ENCODE measurements at regions of chrX and their contacts with region 1.

Region 1: GRCh38 chrX:9899640-9900111 is 67.5 kb upstream of the CLDN34 start:
- DNase-seq: peak; percentile 91
- ATAC-seq: peak; percentile 48
- H3K4me3 ChIP-seq: no peak overlapping the region
- H3K27ac ChIP-seq: peak overlapping the region; percentile 85
- H3K4me1 ChIP-seq: peaks cover 20% of the 10 kb centered on the region
- H3K27me3 ChIP-seq: no peaks in the 10 kb centered on the region
- CTCF ChIP-seq: no peak
- POLR2A ChIP-seq: no peak
- RAD21 ChIP-seq: 0 out of 2 replicates have a peak, but pooled peaks have one; percentile 3

Region 2: GRCh38 chrX:9737363-9737762 is 162.3 kb before region 1 on chrX:
- CTCF ChIA-PET with region 1: no interaction called
- POLR2A ChIA-PET with region 1: no interaction called
- dilution Hi-C with region 1: no loop called
- in situ Hi-C with region 1: no loop called
- intact Hi-C with region 1: no loop called
- DNase-seq: no peak
- ATAC-seq: no peak
- H3K4me3 ChIP-seq: no peak overlapping the region
- H3K27ac ChIP-seq: no peak overlapping the region
- H3K4me1 ChIP-seq: no peaks in the 10 kb centered on the region
- H3K27me3 ChIP-seq: peaks cover 5% of the 10 kb centered on the region
- CTCF ChIP-seq: no peak
- POLR2A ChIP-seq: no peak
- RAD21 ChIP-seq: no peak

Region 3: GRCh38 chrX:9955506-9955905 is 55.8 kb after region 1 on chrX:
- CTCF ChIA-PET with region 1: interaction called, 4 read pairs
- POLR2A ChIA-PET with region 1: no interaction called
- dilution Hi-C with region 1: no loop called
- in situ Hi-C with region 1: no loop called
- intact Hi-C with region 1: loop called (anchors 2 kb)
- DNase-seq: peak; percentile 90
- ATAC-seq: peak; percentile 84
- H3K4me3 ChIP-seq: no peak overlapping the region
- H3K27ac ChIP-seq: peak overlapping the region; percentile 99
- H3K4me1 ChIP-seq: peaks cover 8% of the 10 kb centered on the region
- H3K27me3 ChIP-seq: no peaks in the 10 kb centered on the region
- CTCF ChIP-seq: no peak
- POLR2A ChIP-seq: no peak
- RAD21 ChIP-seq: no peak

Region 4: GRCh38 chrX:9995855-9996339 is 96.2 kb after region 1 on chrX:
- CTCF ChIA-PET with region 1: no interaction called
- POLR2A ChIA-PET with region 1: interaction called, 10 read pairs
- dilution Hi-C with region 1: no loop called
- in situ Hi-C with region 1: no loop called
- intact Hi-C with region 1: no loop called
- DNase-seq: peak; percentile 79
- ATAC-seq: peak; percentile 94
- H3K4me3 ChIP-seq: no peak overlapping the region
- H3K27ac ChIP-seq: no peak overlapping the region
- H3K4me1 ChIP-seq: no peaks in the 10 kb centered on the region
- H3K27me3 ChIP-seq: no peaks in the 10 kb centered on the region
- CTCF ChIP-seq: peak; percentile 98
- POLR2A ChIP-seq: no peak
- RAD21 ChIP-seq: peak; percentile 88

Region 5: DNA sequence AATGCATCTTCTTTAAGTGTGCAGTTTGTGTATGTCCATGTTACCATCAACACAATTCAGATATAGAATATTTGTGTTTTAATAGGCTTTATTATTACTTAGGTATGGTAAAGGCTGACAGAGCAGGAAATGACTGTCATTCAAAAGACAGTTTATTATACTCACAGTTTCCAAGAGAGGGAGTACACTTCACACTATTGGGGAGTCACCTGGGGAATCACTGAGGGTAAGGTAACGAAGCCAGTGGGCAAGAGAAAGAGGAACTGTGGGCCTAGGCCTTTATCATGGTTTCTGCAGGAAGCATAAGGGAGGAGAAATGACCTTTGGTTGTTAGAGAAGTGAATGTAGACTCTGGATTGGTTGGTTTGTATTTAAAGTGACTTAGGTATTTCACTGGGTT is 976.3 kb after region 1 on chrX:
- CTCF ChIA-PET with region 1: no interaction called
- POLR2A ChIA-PET with region 1: no interaction called
- dilution Hi-C with region 1: no loop called
- in situ Hi-C with region 1: no loop called
- intact Hi-C with region 1: no loop called
- DNase-seq: no peak
- ATAC-seq: no peak
- H3K4me3 ChIP-seq: no peak overlapping the region
- H3K27ac ChIP-seq: no peak overlapping the region
- H3K4me1 ChIP-seq: no peaks in the 10 kb centered on the region
- H3K27me3 ChIP-seq: no peaks in the 10 kb centered on the region
- CTCF ChIP-seq: no peak
- POLR2A ChIP-seq: no peak
- RAD21 ChIP-seq: no peak

Measured in IMR-90 (cell line).